Head of caudate nucleus (tissue), 42 donors: ENCODE measurements at regions of chr2 and their contacts with region 1.

Region 1: DNA sequence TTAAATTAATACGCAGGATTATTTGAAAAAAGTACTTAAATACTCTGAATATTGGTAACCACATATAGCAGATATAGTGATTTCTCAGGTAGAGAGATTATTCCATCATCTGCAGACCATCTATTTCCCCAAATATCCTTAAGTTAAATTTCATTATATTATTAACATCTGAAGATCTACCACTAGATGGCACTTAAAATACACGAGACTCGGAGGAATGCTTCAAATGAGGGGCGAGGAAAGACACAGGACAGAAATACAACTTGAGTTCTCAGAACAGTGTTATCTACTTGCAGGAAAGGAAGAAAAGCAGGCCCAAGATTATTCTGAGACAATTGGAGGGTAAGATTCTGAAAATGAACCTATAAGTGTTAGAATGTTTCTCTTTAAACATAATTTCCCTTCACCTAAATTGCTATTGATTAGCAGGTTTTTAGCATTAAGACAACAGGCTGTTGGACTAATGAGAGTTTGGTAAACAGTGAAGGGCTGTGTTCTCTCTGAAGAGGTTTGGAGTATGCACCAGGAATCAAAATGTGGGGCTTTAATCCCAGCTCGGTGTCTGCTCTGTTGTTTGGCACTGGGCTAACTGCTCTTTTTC is 76.9 kb upstream of the GCFC2 start:
- DNase-seq: peak in 11 of 42 donors; percentile 6 to 56 (median 30)

Region 2: DNA sequence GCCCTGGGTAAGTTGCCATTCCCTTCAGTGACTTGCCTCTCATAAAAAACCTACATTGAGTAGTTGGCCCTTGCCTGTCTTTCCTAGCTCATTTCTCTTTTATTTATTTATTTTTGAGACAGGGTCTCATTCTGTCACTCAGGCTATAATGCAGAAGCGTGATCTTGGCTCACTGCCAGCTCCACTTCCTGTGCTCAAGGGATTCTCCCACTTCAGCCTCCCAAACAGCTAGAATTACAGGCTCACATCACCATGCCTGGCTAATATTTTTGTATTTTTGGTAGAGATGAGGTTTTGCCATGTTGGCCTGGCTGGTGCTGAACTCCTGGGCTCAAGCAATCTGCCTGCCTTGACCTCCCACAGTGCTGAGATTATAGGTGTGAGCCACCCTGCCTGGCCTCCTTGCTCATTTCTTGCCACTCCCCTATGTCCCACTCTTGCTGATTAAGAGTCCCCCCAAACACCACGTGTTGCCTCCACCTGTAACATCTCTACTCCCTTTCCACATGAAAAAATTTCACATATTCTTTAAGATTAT is 239.5 kb before region 1 on chr2:
- intact Hi-C with region 1: no loop called
- DNase-seq: peak in 2 of 42 donors; percentile 23 to 50

Region 3: GRCh38 chr2:75705921-75706320 is 81.7 kb before region 1 on chr2:
- intact Hi-C with region 1: no loop called
- DNase-seq: no peak

Region 4: GRCh38 chr2:76599732-76600368 is 812.2 kb after region 1 on chr2:
- intact Hi-C with region 1: loop called (anchors 5 kb)
- DNase-seq: peak; percentile 7 to 85 (median 56)